ENCODE measurements at regions of chr10 and their contacts with region 1.

Region 1: DNA sequence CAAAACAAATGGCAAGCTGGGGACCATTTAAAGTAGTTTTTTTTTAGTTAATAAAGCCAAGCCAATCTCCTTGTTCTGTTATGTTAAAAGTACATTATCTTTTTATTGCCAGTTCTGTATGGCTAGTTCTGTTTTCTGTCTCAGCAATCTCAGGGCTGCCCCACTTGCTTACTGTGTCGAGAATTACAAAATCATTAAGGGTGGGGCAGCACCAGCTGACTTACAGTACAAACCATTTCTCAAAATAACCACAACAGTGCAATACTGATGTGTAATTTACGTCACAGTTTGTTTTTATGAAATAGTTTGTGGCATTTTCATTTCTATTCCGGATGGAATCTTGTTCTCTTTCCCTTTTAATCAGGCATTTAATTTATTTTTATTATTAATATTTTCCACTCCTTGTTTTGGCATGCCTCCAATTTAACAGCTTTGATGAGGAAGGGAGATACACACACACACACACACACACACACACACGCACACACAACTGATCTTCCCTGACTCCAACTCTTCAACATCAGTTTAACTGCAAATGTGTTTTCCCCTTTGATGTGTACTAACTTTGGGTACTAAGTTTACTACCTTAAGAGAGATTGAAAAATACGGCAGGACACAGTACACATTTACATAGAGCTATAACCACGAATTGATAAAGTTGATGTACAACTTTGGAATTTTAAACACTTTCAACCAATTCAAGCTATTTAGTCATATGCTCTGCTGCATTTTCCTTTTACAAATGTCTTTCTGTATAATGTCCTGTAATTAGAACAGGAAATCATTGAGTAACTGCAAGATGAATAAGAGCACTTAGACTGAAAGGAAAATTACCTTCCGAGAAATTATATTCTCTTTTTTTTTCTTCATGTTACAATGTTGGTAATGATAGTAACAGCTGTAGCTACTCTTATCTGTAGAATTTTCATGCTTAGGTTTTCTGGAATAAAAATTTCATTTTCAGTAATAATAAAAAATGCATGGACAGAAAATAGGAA is 91.5 kb downstream of the ARID5B start:
- DNase-seq: no peak
- ATAC-seq: peak; percentile 59
- H3K4me3 Mint-ChIP-seq: peak overlapping the region; percentile 62
- H3K27ac Mint-ChIP-seq: peak overlapping the region; percentile 89
- H3K4me1 Mint-ChIP-seq: peaks cover 90% of the 10 kb centered on the region
- H3K27me3 Mint-ChIP-seq: no peaks in the 10 kb centered on the region
- CTCF ChIP-seq: no peak

Region 2: GRCh38 chr10:60394446-60394845 is 1598.5 kb before region 1 on chr10:
- CTCF ChIA-PET with region 1: no interaction called
- POLR2A ChIA-PET with region 1: no interaction called
- intact Hi-C with region 1: no loop called
- DNase-seq: no peak
- ATAC-seq: no peak
- H3K4me3 Mint-ChIP-seq: no peak overlapping the region
- H3K27ac Mint-ChIP-seq: no peak overlapping the region
- H3K4me1 Mint-ChIP-seq: peaks cover 14% of the 10 kb centered on the region
- H3K27me3 Mint-ChIP-seq: no peaks in the 10 kb centered on the region
- CTCF ChIP-seq: no peak

Region 3: DNA sequence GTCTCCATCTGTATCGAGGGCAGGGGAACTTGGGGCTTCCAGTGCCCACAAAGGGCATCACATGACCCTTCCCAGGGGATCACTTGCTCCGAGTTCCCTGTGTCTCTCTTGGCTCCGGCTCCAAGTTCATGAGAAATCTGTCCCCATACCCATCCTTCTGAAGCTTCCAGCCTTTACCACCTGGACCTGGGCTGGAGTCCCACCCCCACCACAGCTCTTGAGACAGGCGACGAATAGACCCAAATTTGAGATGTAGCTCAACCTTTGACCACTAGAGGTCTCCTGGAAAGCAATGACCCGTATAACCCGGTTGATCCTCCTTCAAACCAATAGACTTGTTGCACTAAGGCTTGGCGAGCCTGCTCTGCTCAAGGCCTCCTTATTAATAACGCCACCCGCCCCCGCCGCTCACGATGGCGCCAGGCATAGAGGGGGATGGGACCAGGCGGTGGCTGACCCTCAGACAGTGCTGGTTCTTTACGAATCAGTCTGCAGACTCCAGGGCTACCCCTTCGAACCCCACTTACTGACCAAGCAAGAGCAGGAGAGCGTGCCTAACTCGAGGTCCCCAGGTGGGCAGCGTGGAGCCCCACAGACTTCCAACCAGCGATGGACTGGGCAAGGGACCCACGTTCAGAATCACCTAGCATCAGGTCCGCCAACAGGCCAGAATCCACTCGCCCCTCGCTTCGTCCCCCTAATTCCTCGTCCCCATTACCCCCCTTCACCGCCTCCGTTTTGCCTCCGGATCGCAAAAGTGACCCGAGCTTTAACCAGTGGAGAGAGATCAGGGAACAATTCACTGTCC is 95.9 kb before region 1 on chr10:
- CTCF ChIA-PET with region 1: interaction called, 18 read pairs
- POLR2A ChIA-PET with region 1: interaction called, 320 read pairs
- intact Hi-C with region 1: loop called (anchors 1 kb)
- DNase-seq: peak; percentile 43
- ATAC-seq: peak; percentile 71
- H3K4me3 Mint-ChIP-seq: peak overlapping the region; percentile 97
- H3K27ac Mint-ChIP-seq: peak overlapping the region; percentile 98
- H3K4me1 Mint-ChIP-seq: peaks cover 37% of the 10 kb centered on the region
- H3K27me3 Mint-ChIP-seq: no peaks in the 10 kb centered on the region
- CTCF ChIP-seq: no peak

Region 4: GRCh38 chr10:61961278-61961677 is 31.7 kb before region 1 on chr10:
- CTCF ChIA-PET with region 1: no interaction called
- POLR2A ChIA-PET with region 1: interaction called, 21 read pairs
- intact Hi-C with region 1: no loop called
- DNase-seq: no peak
- ATAC-seq: peak; percentile 52
- H3K4me3 Mint-ChIP-seq: peak overlapping the region; percentile 35
- H3K27ac Mint-ChIP-seq: peak overlapping the region; percentile 88
- H3K4me1 Mint-ChIP-seq: peaks cover 87% of the 10 kb centered on the region
- H3K27me3 Mint-ChIP-seq: no peaks in the 10 kb centered on the region
- CTCF ChIP-seq: no peak

Region 5: DNA sequence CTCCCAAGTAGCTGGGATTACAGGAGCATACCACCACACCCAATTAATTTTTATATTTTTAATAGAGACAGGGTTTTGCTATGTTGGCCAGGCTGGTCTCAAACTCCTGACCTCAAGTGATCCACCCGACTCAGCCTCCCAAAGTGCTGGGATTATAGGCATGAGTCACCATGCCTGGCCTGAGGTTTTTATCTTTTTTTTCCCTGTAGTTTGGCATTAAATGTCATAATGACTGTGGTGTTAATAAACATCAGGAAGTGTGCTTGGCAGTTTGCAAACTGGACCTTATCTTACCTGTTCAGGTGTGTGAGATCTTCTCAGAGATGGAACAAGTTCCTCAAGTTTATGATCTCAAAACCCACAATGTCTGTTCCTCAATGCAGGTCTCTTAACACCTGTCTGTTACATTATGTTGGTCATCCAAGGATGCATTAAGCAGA is 11.5 kb before region 1 on chr10:
- CTCF ChIA-PET with region 1: interaction called, 3 read pairs
- POLR2A ChIA-PET with region 1: interaction called, 53 read pairs
- intact Hi-C with region 1: no loop called
- DNase-seq: no peak
- ATAC-seq: no peak
- H3K4me3 Mint-ChIP-seq: no peak overlapping the region
- H3K27ac Mint-ChIP-seq: peak overlapping the region; percentile 79
- H3K4me1 Mint-ChIP-seq: peaks cover 91% of the 10 kb centered on the region
- H3K27me3 Mint-ChIP-seq: no peaks in the 10 kb centered on the region
- CTCF ChIP-seq: no peak

Region 6: GRCh38 chr10:62016623-62017490 is 23.9 kb after region 1 on chr10:
- CTCF ChIA-PET with region 1: interaction called, 10 read pairs
- POLR2A ChIA-PET with region 1: interaction called, 168 read pairs
- intact Hi-C with region 1: loop called (anchors 1 kb)
- DNase-seq: peak; percentile 40
- ATAC-seq: peak; percentile 65
- H3K4me3 Mint-ChIP-seq: peak overlapping the region; percentile 66
- H3K27ac Mint-ChIP-seq: peak overlapping the region; percentile 96
- H3K4me1 Mint-ChIP-seq: peaks cover 84% of the 10 kb centered on the region
- H3K27me3 Mint-ChIP-seq: no peaks in the 10 kb centered on the region
- CTCF ChIP-seq: no peak